Right cardiac atrium (tissue), 5 donors: ENCODE measurements at regions of chr11 and their contacts with region 1.

Region 1: GRCh38 chr11:95835768-95836488 is 45.6 kb downstream of the CEP57 start:
- DNase-seq: peak; percentile 32 to 61 (median 59)
- ATAC-seq: peak; percentile 89 to 94
- H3K4me3 ChIP-seq: no peak overlapping the region
- H3K27ac ChIP-seq: no peak overlapping the region
- H3K4me1 ChIP-seq: no peaks in the 10 kb centered on the region
- H3K27me3 ChIP-seq: no peaks in the 10 kb centered on the region

Region 2: DNA sequence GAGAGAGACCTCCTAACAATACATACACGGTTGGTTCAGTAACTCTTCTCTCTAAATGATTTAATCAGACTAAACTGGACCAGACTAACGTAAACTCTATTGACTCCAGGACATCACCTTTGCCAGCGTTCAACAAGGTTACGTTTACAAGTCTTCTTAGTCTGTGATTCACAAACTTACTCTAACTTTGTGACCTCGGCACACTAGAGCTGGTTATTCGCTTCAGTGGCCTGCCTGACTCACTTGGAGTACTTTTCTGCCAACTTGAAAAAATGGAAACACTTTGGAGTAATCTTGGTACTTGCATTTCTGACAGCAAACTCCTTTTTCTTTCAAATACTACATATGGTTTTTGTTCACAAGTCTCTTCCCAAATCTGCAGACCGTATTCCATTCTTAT is 61.8 kb after region 1 on chr11:
- intact Hi-C with region 1: no loop called
- DNase-seq: no peak
- ATAC-seq: no peak
- H3K4me3 ChIP-seq: no peak overlapping the region
- H3K27ac ChIP-seq: no peak overlapping the region
- H3K4me1 ChIP-seq: no peaks in the 10 kb centered on the region
- H3K27me3 ChIP-seq: no peaks in the 10 kb centered on the region

Region 3: GRCh38 chr11:96357794-96358193 is 521.9 kb after region 1 on chr11:
- intact Hi-C with region 1: loop called in 2 of 4 experiments (anchors 10 kb)
- DNase-seq: no peak
- ATAC-seq: no peak
- H3K4me3 ChIP-seq: no peak overlapping the region
- H3K27ac ChIP-seq: no peak overlapping the region
- H3K4me1 ChIP-seq: no peaks in the 10 kb centered on the region
- H3K27me3 ChIP-seq: no peaks in the 10 kb centered on the region

Region 4: DNA sequence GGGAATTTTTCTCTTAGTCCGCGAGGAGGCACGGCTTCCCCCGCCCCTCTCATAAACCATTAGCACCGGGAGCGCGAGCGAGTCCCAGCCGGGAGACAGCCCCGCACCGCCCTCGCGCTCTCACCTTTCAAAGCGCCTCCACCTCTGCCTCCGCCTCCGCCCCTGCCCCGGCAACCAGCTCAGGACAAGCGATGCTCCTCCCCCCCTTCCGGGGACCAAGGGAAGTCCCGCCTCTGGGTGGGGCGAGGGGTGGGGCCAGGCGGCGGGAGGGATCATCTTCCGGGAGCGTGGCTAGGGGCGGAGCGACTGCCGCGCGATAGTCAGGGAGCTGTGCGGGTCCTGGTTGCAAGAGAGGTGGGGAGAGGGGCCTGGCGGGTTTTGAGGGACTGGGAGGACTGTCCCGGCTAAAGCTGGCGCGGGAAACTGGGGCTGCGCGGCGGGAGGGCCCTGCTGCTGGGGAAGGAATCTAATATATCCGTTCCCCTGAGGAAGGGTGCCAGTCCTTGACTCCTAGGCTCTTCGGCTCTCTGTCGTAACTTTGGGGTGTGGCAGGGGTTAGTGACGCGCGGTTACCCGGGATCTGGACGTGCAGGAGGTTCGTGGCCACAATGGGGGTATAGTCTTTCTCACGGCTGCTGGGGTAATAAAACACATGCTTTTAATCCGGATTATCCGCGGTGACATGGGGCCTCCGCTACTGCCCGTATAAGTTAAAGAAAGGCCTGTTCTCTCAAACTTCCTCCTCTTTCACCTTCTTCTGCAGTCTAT is 554.0 kb after region 1 on chr11 and contains the starts of genes CCDC82 and JRKL:
- intact Hi-C with region 1: loop called in 2 of 4 experiments (anchors 10 kb)
- DNase-seq: peak; percentile 96 to 99 (median 98)
- ATAC-seq: peak; percentile 100
- H3K4me3 ChIP-seq: peak within 1 kb of the TSS; percentile 93
- H3K27ac ChIP-seq: peak within 1 kb of the TSS; percentile 69
- H3K4me1 ChIP-seq: no peaks in the 10 kb centered on the region
- H3K27me3 ChIP-seq: no peaks in the 10 kb centered on the region
- total RNA-seq, gene CCDC82: 17.2 to 23.1 (median 18.5) TPM
- total RNA-seq, gene JRKL: 6.8 to 8.5 (median 7.6) TPM

Region 5: DNA sequence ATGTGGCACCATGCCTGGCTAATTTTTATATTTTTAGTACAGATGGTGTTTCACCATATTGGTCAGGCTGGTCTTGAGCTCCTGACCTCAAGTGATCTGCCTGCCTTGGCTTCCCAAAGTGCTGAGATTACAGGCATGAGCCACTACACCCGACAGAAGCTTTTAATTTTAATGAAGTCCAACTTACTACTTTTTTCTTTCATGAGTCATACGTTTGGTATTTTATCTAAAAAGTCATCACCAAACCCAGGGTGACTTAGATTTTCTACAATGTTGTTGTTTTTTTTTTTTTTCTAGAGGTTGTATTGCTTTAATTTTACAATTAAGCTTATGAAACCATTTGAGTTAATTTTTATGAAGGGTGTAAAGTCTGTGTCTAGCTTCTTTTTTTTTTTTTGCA is 588.8 kb after region 1 on chr11:
- intact Hi-C with region 1: loop called in 1 of 4 experiments (anchors 5 kb)
- DNase-seq: no peak
- ATAC-seq: no peak
- H3K4me3 ChIP-seq: no peak overlapping the region
- H3K27ac ChIP-seq: no peak overlapping the region
- H3K4me1 ChIP-seq: no peaks in the 10 kb centered on the region
- H3K27me3 ChIP-seq: no peaks in the 10 kb centered on the region